WTC11 (cell line): ENCODE measurements at regions of chr7 and their contacts with region 1.

Region 1: GRCh38 chr7:144738708-144739314 is 97.0 kb downstream of the TPK1 start:
- DNase-seq: no peak
- ATAC-seq: peak; percentile 66
- H3K4me3 Mint-ChIP-seq: no peak overlapping the region
- H3K27ac Mint-ChIP-seq: no peak overlapping the region
- H3K4me1 Mint-ChIP-seq: no peaks in the 10 kb centered on the region
- H3K27me3 Mint-ChIP-seq: no peaks in the 10 kb centered on the region
- CTCF ChIP-seq: peak; percentile 39; the same call in 1 of the 2 replicates

Region 2: GRCh38 chr7:144416341-144416740 is 322.5 kb before region 1 on chr7:
- CTCF ChIA-PET with region 1: no interaction called
- POLR2A ChIA-PET with region 1: no interaction called
- DNase-seq: no peak
- ATAC-seq: no peak
- H3K4me3 Mint-ChIP-seq: no peak overlapping the region
- H3K27ac Mint-ChIP-seq: no peak overlapping the region
- H3K4me1 Mint-ChIP-seq: peaks cover 15% of the 10 kb centered on the region
- H3K27me3 Mint-ChIP-seq: no peaks in the 10 kb centered on the region; the same call in 1 of the 2 replicates
- CTCF ChIP-seq: no peak

Region 3: GRCh38 chr7:144786522-144786921 is 47.7 kb after region 1 on chr7:
- CTCF ChIA-PET with region 1: interaction called, 10 read pairs
- POLR2A ChIA-PET with region 1: no interaction called
- DNase-seq: no peak
- ATAC-seq: peak; percentile 83
- H3K4me3 Mint-ChIP-seq: no peak overlapping the region
- H3K27ac Mint-ChIP-seq: no peak overlapping the region
- H3K4me1 Mint-ChIP-seq: peaks cover 20% of the 10 kb centered on the region
- H3K27me3 Mint-ChIP-seq: no peaks in the 10 kb centered on the region
- CTCF ChIP-seq: no peak